ENCODE measurements at regions of chr15 and their contacts with region 1.

Region 1: DNA sequence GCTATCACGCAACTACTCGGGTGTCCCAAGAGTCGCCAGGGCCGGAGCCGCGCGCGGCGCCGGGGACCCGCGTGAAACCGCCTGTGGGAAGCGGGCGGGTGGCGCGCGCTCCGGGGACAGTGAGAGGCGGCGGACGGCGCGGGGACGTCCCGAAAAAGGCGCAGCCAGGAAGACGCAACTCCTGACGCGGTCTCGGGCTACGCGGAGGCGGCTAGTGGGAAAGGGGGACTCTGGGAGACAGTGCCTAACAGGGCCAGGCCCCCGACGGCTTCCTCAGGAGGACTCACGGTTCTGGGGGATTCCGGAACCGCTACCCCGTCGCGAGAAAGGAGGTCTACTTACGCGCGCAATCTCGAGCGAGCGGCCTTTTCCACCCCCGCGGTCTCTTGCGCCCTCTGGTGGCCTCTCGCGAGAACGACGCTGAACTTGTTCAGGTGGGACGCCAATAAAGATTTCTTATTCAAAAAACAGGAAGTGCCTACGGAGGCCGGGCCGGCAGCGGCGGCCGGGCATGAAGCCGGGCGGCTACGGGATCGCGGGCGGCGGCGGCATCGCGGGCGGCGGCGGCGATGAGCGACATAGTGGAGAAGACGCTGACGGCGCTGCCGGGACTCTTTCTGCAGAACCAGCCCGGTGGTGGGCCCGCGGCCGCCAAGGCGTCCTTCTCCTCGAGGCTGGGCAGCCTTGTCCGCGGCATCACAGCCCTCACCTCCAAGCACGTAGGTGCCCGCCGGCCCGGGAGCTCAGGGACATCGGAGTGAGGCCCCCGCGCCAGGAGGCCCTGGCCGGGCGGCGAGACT is at the start of gene AP4E1:
- DNase-seq: peak; percentile 66
- H3K4me3 ChIP-seq: peak within 1 kb of the TSS; percentile 98
- H3K27me3 ChIP-seq: no peaks in the 10 kb centered on the region
- CTCF ChIP-seq: peak; percentile 89
- polyA plus RNA-seq, gene AP4E1: 1.8 and 4.2 TPM in 2 replicates

Region 2: GRCh38 chr15:50675536-50676144 is 232.8 kb before region 1 on chr15:
- CTCF ChIA-PET with region 1: interaction called, 12 read pairs
- POLR2A ChIA-PET with region 1: no interaction called
- DNase-seq: no peak
- H3K4me3 ChIP-seq: no peak overlapping the region
- H3K27me3 ChIP-seq: no peaks in the 10 kb centered on the region
- CTCF ChIP-seq: peak; percentile 63

Region 3: DNA sequence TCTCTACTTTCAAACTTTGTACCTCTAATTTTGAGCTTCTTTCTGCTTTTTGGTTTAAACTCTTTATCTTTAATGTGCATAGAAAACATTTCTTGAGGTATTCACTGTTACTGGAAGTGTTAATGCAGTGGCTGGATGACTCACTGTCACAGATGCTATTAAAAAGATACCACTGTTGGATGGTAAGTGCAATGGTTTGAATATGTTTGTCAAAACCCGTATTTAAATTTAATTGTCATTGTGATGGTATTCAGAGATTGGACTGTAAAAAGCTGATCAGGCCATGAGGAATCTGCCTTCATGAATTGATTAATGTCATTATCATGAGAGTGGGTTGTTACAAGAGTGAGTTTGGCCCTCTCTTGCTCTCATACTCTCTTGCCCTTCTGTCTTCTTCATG is 70.6 kb after region 1 on chr15:
- CTCF ChIA-PET with region 1: no interaction called
- POLR2A ChIA-PET with region 1: no interaction called
- DNase-seq: peak; percentile 4
- H3K4me3 ChIP-seq: no peak overlapping the region
- H3K27me3 ChIP-seq: no peaks in the 10 kb centered on the region
- CTCF ChIP-seq: no peak

Measured in BJ (cell line).